Left ventricle myocardium inferior (tissue), 1 donor: ENCODE measurements at regions of chr10 and their contacts with region 1.

Region 1: GRCh38 chr10:80078448-80079311 is at the start of gene TMEM254:
- DNase-seq: peak; percentile 95
- H3K4me3 ChIP-seq: peak within 1 kb of the TSS; percentile 84
- H3K27ac ChIP-seq: peak within 1 kb of the TSS; percentile 99
- H3K4me1 ChIP-seq: peaks cover 25% of the 10 kb centered on the region
- H3K27me3 ChIP-seq: no peaks in the 10 kb centered on the region
- CTCF ChIP-seq: no peak
- total RNA-seq, gene TMEM254: 9.2 TPM

Region 2: DNA sequence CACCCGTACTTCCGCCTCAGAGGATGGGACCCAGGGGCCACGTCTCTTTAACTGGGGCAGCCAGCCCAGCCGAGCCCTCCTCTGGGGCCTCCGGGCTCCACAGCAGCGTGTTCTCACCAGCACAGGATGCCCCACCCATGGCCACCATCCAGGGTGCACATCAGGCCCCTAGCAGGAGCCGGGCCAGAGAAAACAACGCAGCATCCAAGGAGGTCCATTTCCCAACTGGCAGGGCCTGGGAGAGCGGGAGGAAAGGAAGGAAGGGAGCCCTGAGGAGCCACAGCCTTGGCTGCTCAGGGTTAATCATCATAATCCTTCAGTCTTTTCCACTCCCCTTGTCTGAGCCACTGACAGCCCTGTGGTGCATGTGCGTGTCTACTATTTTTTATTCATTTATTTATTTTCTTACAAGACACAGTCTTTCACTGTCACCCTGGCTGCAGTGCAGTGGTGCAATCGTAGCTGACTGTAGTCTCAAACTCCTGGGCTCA is 57.4 kb after region 1 on chr10:
- intact Hi-C with region 1: loop called (anchors 10 kb)
- DNase-seq: peak; percentile 97
- H3K4me3 ChIP-seq: peak overlapping the region; percentile 67
- H3K27ac ChIP-seq: peak overlapping the region; percentile 90
- H3K4me1 ChIP-seq: peaks cover 65% of the 10 kb centered on the region
- H3K27me3 ChIP-seq: peaks cover 19% of the 10 kb centered on the region
- CTCF ChIP-seq: no peak

Region 3: GRCh38 chr10:80333983-80334382 is 255.3 kb after region 1 on chr10:
- intact Hi-C with region 1: no loop called
- DNase-seq: no peak
- H3K4me3 ChIP-seq: no peak overlapping the region
- H3K27ac ChIP-seq: no peak overlapping the region
- H3K4me1 ChIP-seq: no peaks in the 10 kb centered on the region
- H3K27me3 ChIP-seq: peaks cover 14% of the 10 kb centered on the region
- CTCF ChIP-seq: no peak